ENCODE measurements at regions of chr9 and their contacts with region 1.

Region 1: DNA sequence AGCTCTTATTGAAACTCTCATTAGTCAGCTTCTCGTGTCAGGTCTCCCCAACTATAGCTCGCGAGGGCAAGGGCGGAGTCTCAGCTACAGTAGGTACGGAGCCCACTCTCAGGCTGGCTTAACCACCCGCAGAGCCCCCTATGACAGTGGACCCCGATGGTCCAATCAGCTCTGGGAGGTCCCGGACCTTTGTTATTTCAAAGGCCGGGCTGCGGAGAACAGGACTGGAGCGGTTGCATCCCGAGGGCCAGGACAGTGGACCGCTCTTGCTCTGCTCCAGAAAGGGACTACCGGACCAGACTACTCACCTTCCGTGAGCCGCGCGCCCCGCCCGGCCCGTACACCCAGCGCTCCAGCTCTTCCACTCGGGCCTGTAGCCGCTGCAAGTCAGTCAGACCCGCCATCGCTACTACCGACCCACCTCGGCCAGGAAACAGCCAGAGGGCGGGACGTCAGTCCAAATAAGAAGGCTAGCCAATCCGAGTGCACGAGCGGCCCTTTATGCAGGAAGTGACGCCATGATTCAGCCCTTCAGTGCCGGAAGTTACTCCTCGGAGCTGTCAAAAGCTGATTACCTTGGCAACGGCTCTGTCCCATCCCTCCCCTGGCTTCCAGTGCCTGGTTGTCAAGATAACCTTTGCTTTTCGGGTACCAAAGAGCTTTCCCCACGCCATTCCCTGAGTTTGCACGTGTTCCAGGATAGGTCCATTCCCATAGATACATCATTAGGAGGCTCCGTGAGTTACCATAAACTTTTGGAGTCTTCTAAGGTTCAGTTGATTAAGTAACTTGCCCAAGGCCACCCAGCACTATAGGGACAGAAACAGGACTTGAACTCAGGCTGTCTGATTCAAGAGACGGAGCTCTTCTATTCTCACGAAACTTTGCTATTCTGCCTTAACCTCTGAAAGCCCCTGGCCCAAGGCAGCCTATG is at the start of gene DCTN3:
- DNase-seq: peak; percentile 91
- H3K4me3 Mint-ChIP-seq: peak within 1 kb of the TSS; percentile 89
- H3K27ac Mint-ChIP-seq: peak within 1 kb of the TSS; percentile 80
- H3K4me1 Mint-ChIP-seq: peaks cover 41% of the 10 kb centered on the region
- H3K27me3 Mint-ChIP-seq: peaks cover 31% of the 10 kb centered on the region
- total RNA-seq, gene DCTN3: 59.3 and 62.2 TPM in 2 replicates

Region 2: GRCh38 chr9:34559624-34560452 is 60.5 kb before region 1 on chr9:
- intact Hi-C with region 1: no loop called
- DNase-seq: no peak
- H3K4me3 Mint-ChIP-seq: no peak overlapping the region
- H3K27ac Mint-ChIP-seq: no peak overlapping the region
- H3K4me1 Mint-ChIP-seq: no peaks in the 10 kb centered on the region
- H3K27me3 Mint-ChIP-seq: peaks cover 6% of the 10 kb centered on the region

Region 3: DNA sequence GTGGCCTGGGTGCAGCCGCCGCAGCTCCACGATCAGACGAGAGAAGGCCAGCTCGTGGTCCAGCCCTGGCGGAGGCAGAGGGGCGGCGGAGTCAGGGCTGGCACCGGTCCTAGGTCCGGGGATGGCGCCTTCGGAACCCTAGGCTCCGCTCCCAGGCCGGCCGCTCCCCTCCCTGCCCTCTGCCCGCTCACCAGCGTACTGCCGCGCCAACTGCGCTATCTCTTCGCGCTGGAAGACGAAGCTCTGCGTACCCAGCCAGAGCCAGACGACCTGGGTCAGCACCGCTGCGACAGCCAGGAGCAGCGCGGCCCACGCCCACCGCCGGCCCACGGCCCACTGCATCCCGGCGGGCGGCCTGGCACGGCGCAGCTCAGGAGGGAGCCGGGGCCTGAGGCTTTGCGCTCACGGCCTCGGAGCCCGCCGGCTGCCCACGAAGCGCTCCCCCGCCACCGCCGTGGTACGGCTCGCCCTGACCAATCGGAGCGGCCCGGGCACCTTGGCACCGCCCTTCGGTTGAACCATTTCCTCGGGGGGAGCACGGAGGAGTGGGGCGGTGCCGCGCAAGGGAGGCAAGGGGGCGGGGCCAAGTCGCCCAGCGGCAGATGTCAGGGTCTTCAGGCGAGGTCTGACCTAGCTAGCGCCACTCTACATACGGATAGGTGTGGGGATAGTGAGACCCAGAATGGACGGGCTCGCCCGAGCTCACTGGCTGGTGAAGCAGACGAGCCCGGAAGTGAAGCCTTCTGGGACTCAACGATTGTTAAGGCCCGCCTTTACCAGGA is 17.2 kb after region 1 on chr9 and contains the start of gene SIGMAR1:
- intact Hi-C with region 1: loop called (anchors 1 kb)
- DNase-seq: peak; percentile 94
- H3K4me3 Mint-ChIP-seq: peak within 1 kb of the TSS; percentile 97
- H3K27ac Mint-ChIP-seq: peak within 1 kb of the TSS; percentile 88
- H3K4me1 Mint-ChIP-seq: peaks cover 39% of the 10 kb centered on the region
- H3K27me3 Mint-ChIP-seq: no peaks in the 10 kb centered on the region
- total RNA-seq, gene SIGMAR1: 128 and 130 TPM in 2 replicates